ENCODE measurements at regions of chr10 and their contacts with region 1.

Region 1: GRCh38 chr10:90912174-90912573 is 8.7 kb downstream of the ANKRD1 start:
- DNase-seq: no peak
- ATAC-seq: no peak
- H3K4me3 ChIP-seq: no peak overlapping the region
- H3K27ac ChIP-seq: peak overlapping the region; percentile 29 to 36; a peak in 3 of 6 replicates
- H3K4me1 ChIP-seq: peaks cover 11% of the 10 kb centered on the region; the same call in 2 of the 3 replicates
- CTCF ChIP-seq: no peak
- EP300 ChIP-seq: no peak
- POLR2A ChIP-seq: no peak
- RAD21 ChIP-seq: no peak

Region 2: GRCh38 chr10:90819911-90820310 is 92.3 kb before region 1 on chr10:
- CTCF ChIA-PET with region 1: no interaction called
- POLR2A ChIA-PET with region 1: no interaction called
- DNase-seq: no peak
- ATAC-seq: no peak
- H3K4me3 ChIP-seq: no peak overlapping the region
- H3K27ac ChIP-seq: no peak overlapping the region
- H3K4me1 ChIP-seq: no peaks in the 10 kb centered on the region
- CTCF ChIP-seq: no peak
- EP300 ChIP-seq: no peak
- POLR2A ChIP-seq: no peak
- RAD21 ChIP-seq: no peak

Region 3: GRCh38 chr10:90847417-90847816 is 64.8 kb before region 1 on chr10:
- CTCF ChIA-PET with region 1: no interaction called
- POLR2A ChIA-PET with region 1: no interaction called
- DNase-seq: no peak
- ATAC-seq: no peak
- H3K4me3 ChIP-seq: no peak overlapping the region
- H3K27ac ChIP-seq: no peak overlapping the region
- H3K4me1 ChIP-seq: no peaks in the 10 kb centered on the region
- CTCF ChIP-seq: no peak
- EP300 ChIP-seq: no peak
- POLR2A ChIP-seq: no peak
- RAD21 ChIP-seq: no peak

Region 4: GRCh38 chr10:90890347-90890746 is 21.8 kb before region 1 on chr10:
- CTCF ChIA-PET with region 1: interaction called, 10 read pairs
- POLR2A ChIA-PET with region 1: no interaction called
- DNase-seq: no peak
- ATAC-seq: no peak
- H3K4me3 ChIP-seq: no peak overlapping the region
- H3K27ac ChIP-seq: no peak overlapping the region
- H3K4me1 ChIP-seq: no peaks in the 10 kb centered on the region
- CTCF ChIP-seq: no peak
- EP300 ChIP-seq: no peak
- POLR2A ChIP-seq: no peak
- RAD21 ChIP-seq: no peak

Region 5: DNA sequence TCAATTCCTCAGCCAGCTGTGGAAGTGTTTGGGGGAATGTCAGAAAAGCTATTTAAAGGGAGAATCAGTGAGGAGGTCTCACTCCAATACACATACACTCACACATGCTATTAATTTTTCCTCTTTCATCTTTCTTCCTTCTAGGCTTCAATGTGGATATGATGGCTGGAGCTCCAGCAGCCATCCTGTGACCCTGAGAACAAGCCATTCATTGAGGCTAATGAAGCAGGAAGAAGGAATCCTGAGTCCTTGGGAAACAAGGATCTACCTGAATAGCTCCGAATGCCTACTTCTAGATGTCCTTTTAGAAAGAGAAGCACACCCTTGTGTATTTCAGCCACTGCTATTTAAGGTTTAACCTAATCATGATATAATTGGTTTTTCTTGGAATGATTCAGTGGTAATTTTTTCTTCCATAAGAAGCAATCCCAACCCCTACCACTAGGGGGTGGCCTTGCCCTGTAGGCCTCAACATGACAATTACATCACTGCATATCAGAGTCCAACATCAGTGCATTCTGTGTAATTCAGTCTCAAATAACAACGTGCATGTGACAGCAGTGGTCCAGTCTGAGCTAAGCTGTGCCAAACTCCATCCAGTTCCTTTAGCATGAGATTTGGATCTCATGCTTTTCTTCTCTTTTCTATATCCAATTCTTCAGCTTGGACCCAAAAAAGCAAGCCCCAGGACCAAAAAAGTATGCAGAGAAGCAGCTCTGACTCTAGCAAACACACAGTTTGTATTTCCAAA is 94.0 kb after region 1 on chr10:
- CTCF ChIA-PET with region 1: interaction called, 12 read pairs
- POLR2A ChIA-PET with region 1: no interaction called
- DNase-seq: peak; percentile 33 to 76
- ATAC-seq: peak; percentile 74 to 84; a peak in 5 of 6 replicates
- H3K4me3 ChIP-seq: no peak overlapping the region
- H3K27ac ChIP-seq: peak overlapping the region in 1 of 2 experiments; percentile 8; a peak in 1 of 6 replicates
- H3K4me1 ChIP-seq: peaks cover 11% of the 10 kb centered on the region
- CTCF ChIP-seq: peak; percentile 82
- EP300 ChIP-seq: no peak
- POLR2A ChIP-seq: no peak
- RAD21 ChIP-seq: peak; percentile 81 to 87

Region 6: DNA sequence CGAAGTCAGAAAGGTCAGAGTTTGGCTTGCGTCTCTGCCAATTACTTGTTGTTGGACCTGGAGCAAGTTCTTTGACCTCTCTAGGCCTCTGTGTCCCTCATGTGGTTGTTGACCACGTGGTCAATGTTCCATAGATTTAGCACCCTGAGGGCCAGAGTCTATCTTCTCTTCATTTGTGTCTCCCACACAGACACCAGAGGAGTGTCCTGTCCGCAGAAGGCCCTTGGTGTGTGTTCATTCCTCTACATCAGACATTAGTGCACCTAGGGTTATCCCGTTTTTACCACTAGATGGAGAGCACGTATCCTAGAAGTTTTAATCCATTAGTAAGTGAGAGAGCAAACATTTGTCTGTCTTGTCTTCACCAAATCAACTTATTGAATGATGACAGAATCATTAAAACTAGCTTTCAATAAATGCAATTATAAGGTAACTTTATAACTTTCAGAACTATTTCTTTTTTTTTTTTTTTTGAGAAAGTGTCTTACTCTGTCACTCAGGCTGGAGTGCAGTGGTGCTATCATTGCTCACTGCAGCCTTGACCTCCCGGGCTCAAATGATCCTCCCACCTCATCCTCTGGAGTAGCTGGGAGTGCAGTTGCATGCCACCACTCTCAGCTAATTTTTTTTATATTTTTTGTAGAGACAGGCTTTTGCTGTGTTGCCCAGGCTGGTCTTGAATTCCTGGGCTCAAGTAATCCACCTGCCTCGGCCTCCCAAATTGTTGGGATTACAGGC is 131.2 kb after region 1 on chr10:
- CTCF ChIA-PET with region 1: interaction called, 11 read pairs
- POLR2A ChIA-PET with region 1: no interaction called
- DNase-seq: peak; percentile 25 to 53
- ATAC-seq: peak; percentile 94 to 97
- H3K4me3 ChIP-seq: no peak overlapping the region
- H3K27ac ChIP-seq: no peak overlapping the region; a peak in 1 of 6 replicates
- H3K4me1 ChIP-seq: no peaks in the 10 kb centered on the region
- CTCF ChIP-seq: peak; percentile 66
- EP300 ChIP-seq: no peak
- POLR2A ChIP-seq: no peak
- RAD21 ChIP-seq: peak; percentile 67 to 77

Region 7: GRCh38 chr10:91227576-91227975 is 315.4 kb after region 1 on chr10:
- CTCF ChIA-PET with region 1: interaction called, 20 read pairs
- POLR2A ChIA-PET with region 1: no interaction called
- DNase-seq: no peak
- ATAC-seq: no peak
- H3K4me3 ChIP-seq: no peak overlapping the region
- H3K27ac ChIP-seq: no peak overlapping the region
- H3K4me1 ChIP-seq: no peaks in the 10 kb centered on the region
- CTCF ChIP-seq: no peak
- EP300 ChIP-seq: no peak
- POLR2A ChIP-seq: no peak
- RAD21 ChIP-seq: no peak

Region 8: GRCh38 chr10:91238191-91238590 is 326.0 kb after region 1 on chr10:
- CTCF ChIA-PET with region 1: interaction called, 18 read pairs
- POLR2A ChIA-PET with region 1: no interaction called
- DNase-seq: no peak
- ATAC-seq: no peak
- H3K4me3 ChIP-seq: no peak overlapping the region
- H3K27ac ChIP-seq: no peak overlapping the region
- H3K4me1 ChIP-seq: no peaks in the 10 kb centered on the region
- CTCF ChIP-seq: no peak
- EP300 ChIP-seq: no peak
- POLR2A ChIP-seq: no peak
- RAD21 ChIP-seq: no peak

Region 9: DNA sequence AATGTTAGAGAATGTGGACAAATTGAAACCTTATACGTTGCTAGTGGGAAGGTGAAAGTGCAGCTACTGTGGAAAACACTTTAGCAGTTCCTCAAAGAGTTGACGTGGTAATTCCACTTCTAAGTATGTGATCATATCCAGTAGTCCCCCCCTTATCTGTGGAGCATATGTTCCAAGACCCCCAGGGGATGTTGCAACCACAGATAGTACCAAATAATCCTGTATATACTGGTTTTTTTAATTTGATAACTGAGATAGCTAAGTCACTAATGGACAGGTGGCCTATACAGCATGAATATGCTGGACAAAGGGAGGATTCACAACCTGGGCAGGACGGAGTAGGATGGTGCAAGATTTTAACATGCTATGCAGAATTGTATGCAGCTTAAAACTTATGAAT is 345.1 kb after region 1 on chr10:
- CTCF ChIA-PET with region 1: interaction called, 19 read pairs
- POLR2A ChIA-PET with region 1: no interaction called
- DNase-seq: no peak
- ATAC-seq: no peak
- H3K4me3 ChIP-seq: no peak overlapping the region
- H3K27ac ChIP-seq: no peak overlapping the region
- H3K4me1 ChIP-seq: no peaks in the 10 kb centered on the region
- CTCF ChIP-seq: no peak
- EP300 ChIP-seq: no peak
- POLR2A ChIP-seq: no peak
- RAD21 ChIP-seq: no peak

Measured in A549 (cell line).